ENCODE measurements at regions of chr14 and their contacts with region 1.

Region 1: DNA sequence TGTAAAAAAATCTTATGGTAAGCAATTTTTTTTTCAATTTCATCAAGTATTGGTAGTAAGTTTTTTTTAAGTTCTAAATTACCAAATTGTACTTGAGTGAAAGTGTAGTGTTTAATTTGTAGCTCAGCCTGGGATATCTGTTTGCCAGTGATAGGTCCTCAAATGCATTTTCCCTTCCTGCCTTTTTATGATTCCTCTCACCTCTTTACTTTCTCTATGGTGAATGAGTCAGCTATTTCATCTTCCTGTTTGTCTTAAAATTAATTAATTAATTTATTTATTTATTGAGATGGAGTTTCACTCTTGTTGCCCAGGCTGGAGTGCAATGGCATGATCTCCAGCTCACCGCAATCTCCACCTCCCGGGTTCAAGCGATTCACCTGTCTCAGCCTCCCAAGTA is 10.6 kb downstream of the SRP54 start:
- DNase-seq: no peak
- ATAC-seq: no peak
- H3K4me3 ChIP-seq: no peak overlapping the region
- H3K27ac ChIP-seq: no peak overlapping the region
- H3K4me1 ChIP-seq: peaks cover 0 to 2% of the 10 kb centered on the region in 2 donors
- H3K27me3 ChIP-seq: no peaks in the 10 kb centered on the region

Region 2: GRCh38 chr14:34931206-34931605 is 62.2 kb before region 1 on chr14:
- intact Hi-C with region 1: no loop called
- DNase-seq: no peak
- ATAC-seq: peak; percentile 48
- H3K4me3 ChIP-seq: no peak overlapping the region
- H3K27ac ChIP-seq: no peak overlapping the region
- H3K4me1 ChIP-seq: no peaks in the 10 kb centered on the region
- H3K27me3 ChIP-seq: no peaks in the 10 kb centered on the region

Region 3: GRCh38 chr14:35046048-35046741 is 52.8 kb after region 1 on chr14 and contains the start of gene FAM177A1:
- intact Hi-C with region 1: loop called in 1 of 2 experiments (anchors 5 kb)
- DNase-seq: peak; percentile 99 to 100
- ATAC-seq: peak; percentile 99
- H3K4me3 ChIP-seq: peak within 1 kb of the TSS; percentile 67 to 83
- H3K27ac ChIP-seq: peak within 1 kb of the TSS; percentile 97 to 99
- H3K4me1 ChIP-seq: peaks cover 0 to 6% of the 10 kb centered on the region in 2 donors
- H3K27me3 ChIP-seq: no peaks in the 10 kb centered on the region
- total RNA-seq, gene FAM177A1: 70.7 to 94.0 TPM